Naive thymus-derived CD8-positive, alpha-beta T cell (primary cell): ENCODE measurements at regions of chr17 and their contacts with region 1.

Region 1: GRCh38 chr17:76278952-76279741 is 14.0 kb downstream of the UBALD2 start:
- DNase-seq: peak; percentile 70 to 93 (median 83)
- ATAC-seq: peak; percentile 92
- H3K4me3 Mint-ChIP-seq: peak overlapping the region in 1 of 10 donors; percentile 20
- H3K27ac Mint-ChIP-seq: peak overlapping the region in 8 of 10 donors; percentile 20 to 86 (median 46)
- H3K4me1 Mint-ChIP-seq: peaks cover 16 to 38% (median 32%) of the 10 kb centered on the region in 4 donors
- H3K27me3 Mint-ChIP-seq: no peaks in the 10 kb centered on the region

Region 2: GRCh38 chr17:76121932-76122430 is 157.2 kb before region 1 on chr17:
- POLR2A ChIA-PET with region 1: interaction called, 152 read pairs
- DNase-seq: no peak
- ATAC-seq: peak; percentile 13 to 37
- H3K4me3 Mint-ChIP-seq: peak overlapping the region; percentile 28 to 78 (median 63)
- H3K27ac Mint-ChIP-seq: peak overlapping the region in 8 of 10 donors; percentile 46 to 90 (median 80)
- H3K4me1 Mint-ChIP-seq: peaks cover 18 to 40% (median 31%) of the 10 kb centered on the region in 4 donors
- H3K27me3 Mint-ChIP-seq: no peaks in the 10 kb centered on the region